ENCODE measurements at regions of chr19 and their contacts with region 1.

Region 1: DNA sequence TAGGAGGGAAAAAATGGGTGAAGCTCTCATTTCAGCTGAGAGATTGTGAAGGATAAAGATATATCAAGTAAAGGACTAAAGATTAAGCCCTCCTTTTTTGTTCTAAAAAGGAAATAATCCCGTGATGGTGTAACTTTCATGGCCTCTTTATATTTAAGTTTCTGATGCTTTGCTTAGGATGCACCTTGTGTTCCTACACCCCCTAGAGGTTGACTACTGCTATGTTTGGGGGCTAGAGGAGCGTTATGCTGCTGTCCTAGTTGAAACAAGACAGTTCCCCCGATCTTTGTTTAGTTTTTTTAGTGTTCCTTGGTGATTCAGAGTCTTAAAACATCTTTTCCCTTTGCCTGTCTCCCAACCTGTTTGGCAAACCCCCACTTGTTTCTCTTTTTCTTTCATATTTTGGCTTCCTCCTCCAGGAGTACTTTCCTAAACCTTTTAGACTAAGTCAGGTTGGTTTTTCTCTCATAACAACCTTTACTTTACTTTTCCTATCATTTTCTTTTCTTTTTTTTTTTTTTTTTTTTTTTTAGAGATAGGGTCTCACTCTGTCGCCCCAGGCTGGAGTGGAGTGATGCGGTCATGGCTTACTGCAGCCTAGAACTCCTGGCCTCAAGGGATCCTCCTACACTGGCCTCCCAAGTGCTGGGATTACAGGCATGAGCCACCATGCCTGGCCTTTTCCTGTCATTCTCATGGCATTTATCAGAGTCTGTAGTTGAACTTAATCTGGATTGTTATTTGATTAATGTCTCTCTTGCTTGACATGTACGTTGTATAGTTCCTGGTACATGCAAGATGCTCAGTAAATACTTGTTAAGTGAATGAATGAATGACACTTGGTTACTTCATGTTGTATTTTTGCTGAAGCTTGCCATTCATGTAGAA is 2.8 kb downstream of the UBA2 start:
- DNase-seq: peak; percentile 42
- H3K4me3 Mint-ChIP-seq: peak overlapping the region; percentile 98
- H3K27ac Mint-ChIP-seq: peak overlapping the region; percentile 95
- H3K4me1 Mint-ChIP-seq: peaks cover 42% of the 10 kb centered on the region
- H3K27me3 Mint-ChIP-seq: no peaks in the 10 kb centered on the region

Region 2: GRCh38 chr19:34351382-34351826 is 79.6 kb before region 1 on chr19:
- CTCF ChIA-PET with region 1: interaction called, 3 read pairs
- POLR2A ChIA-PET with region 1: interaction called, 4 read pairs
- intact Hi-C with region 1: loop called (anchors 1 kb)
- DNase-seq: peak; percentile 38
- H3K4me3 Mint-ChIP-seq: peak overlapping the region; percentile 37
- H3K27ac Mint-ChIP-seq: peak overlapping the region; percentile 92
- H3K4me1 Mint-ChIP-seq: peaks cover 19% of the 10 kb centered on the region
- H3K27me3 Mint-ChIP-seq: no peaks in the 10 kb centered on the region

Region 3: DNA sequence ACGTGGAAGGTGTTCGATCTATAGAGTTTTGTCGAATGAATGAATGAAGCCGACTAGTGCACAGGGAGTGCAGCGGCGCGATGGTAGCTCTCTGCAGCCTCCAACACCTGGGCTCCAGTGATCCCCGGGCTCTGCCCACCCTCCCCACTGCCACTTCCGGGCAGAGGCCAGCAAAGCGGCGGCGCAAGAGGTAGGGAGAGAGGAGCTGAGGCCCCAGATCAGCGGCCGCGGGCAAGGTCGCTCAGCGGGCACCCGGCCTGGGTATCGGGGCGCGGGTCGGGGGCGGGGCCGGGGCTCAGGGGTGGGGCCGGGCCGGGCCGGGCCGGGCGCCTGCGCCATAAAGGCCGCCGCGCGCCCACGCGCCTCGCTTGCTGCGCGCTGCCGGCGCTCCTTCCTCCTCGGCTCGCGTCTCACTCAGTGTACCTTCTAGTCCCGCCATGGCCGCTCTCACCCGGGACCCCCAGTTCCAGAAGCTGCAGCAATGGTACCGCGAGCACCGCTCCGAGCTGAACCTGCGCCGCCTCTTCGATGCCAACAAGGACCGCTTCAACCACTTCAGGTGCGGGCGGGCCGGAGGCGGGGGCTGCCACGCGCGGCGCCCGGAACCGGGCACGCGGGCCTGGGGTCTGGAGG is 66.0 kb before region 1 on chr19 and contains the start of gene GPI:
- CTCF ChIA-PET with region 1: no interaction called
- POLR2A ChIA-PET with region 1: interaction called, 3 read pairs
- intact Hi-C with region 1: loop called (anchors 2 kb)
- DNase-seq: peak; percentile 79
- H3K4me3 Mint-ChIP-seq: peak within 1 kb of the TSS; percentile 95
- H3K27ac Mint-ChIP-seq: peak within 1 kb of the TSS; percentile 84
- H3K4me1 Mint-ChIP-seq: peaks cover 38% of the 10 kb centered on the region
- H3K27me3 Mint-ChIP-seq: no peaks in the 10 kb centered on the region
- total RNA-seq, gene GPI: 549 to 564 TPM

Region 4: DNA sequence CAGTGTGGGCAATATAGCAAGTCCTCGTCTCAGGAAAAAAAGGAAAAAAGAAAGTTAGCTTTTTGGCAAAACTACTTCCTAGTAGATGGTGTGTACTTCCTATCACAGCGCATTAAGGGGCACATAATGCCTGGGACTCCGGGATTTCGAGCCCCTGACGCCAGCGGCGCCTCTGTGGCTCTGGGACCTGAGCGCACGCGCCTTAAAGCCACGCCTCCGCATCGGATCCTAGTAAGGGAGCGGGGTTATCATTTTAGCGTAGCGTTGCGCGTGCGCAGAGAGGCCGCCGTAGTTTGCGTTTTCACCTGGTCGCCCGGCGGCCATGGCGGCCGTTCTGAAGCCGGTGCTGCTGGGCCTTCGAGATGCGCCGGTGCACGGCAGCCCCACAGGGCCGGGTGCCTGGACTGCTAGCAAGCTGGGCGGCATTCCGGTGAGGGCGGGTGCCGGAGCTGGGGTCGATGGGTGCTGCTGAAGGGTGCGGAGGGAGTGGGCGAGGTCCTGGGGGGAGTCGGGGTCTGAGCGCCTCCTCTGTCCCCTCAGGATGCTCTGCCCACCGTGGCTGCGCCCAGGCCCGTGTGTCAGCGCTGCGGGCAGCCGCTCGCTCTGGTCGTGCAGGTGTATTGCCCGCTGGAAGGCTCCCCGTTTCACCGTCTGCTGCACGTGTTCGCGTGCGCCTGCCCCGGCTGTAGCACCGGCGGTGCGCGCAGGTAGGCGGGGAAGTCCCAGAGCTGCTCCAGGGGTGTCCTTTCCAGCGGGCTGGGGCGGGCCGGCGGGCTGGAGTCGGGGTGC is 26.7 kb before region 1 on chr19 and contains the start of gene PDCD2L:
- CTCF ChIA-PET with region 1: interaction called, 6 read pairs
- POLR2A ChIA-PET with region 1: interaction called, 7 read pairs
- intact Hi-C with region 1: loop called (anchors 1 kb)
- DNase-seq: peak; percentile 95
- H3K4me3 Mint-ChIP-seq: peak within 1 kb of the TSS; percentile 90
- H3K27ac Mint-ChIP-seq: peak within 1 kb of the TSS; percentile 73
- H3K4me1 Mint-ChIP-seq: peaks cover 24% of the 10 kb centered on the region
- H3K27me3 Mint-ChIP-seq: no peaks in the 10 kb centered on the region
- total RNA-seq, gene PDCD2L: 29.8 TPM

Region 5: GRCh38 chr19:34501339-34502320 is 70.6 kb after region 1 on chr19:
- CTCF ChIA-PET with region 1: no interaction called
- POLR2A ChIA-PET with region 1: no interaction called
- intact Hi-C with region 1: loop called (anchors 1 kb)
- DNase-seq: peak; percentile 93
- H3K4me3 Mint-ChIP-seq: no peak overlapping the region
- H3K27ac Mint-ChIP-seq: no peak overlapping the region
- H3K4me1 Mint-ChIP-seq: peaks cover 11% of the 10 kb centered on the region
- H3K27me3 Mint-ChIP-seq: peaks cover 13% of the 10 kb centered on the region